ENCODE measurements at regions of chr17 and their contacts with region 1.

Region 1: DNA sequence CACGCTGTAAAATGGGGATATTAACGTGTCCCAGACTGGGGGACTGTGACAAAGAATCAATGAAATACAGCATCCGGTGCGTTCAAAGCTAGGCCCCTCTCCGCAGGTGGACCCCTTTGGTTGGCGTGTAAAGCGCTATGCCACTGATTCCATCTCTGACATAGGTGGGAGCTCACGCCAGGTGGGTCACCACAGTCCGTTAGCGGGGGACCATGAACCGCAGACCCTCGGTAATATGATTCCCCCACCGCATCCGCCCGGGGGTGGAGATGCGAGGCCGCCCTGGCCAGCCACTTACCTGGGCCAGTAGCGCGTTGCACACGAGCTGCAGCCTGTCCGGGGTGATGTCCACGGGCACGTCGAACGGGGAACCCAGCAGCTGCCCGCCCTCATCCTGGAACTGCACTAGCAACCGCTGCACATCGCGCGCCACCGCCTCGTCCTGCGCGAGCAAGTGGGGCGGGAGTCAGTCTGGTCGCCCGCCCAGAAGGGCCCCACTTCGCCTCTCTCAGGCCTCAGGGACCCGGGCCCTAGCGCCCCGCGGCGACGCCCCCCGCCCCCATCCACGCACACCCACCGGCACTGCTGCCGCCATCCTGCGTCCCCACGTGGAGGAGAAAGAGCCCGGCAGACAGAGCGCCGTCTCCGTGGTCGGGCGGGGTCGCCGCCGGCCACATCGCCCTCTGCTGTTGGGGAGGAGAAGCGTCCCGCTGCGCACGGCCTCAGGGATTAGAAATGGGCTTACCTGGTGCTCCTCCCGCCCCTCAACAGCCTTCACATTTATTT is at the start of gene NLE1:
- DNase-seq: peak; percentile 94
- ATAC-seq: peak; percentile 93
- H3K4me3 Mint-ChIP-seq: peak within 1 kb of the TSS; percentile 80
- H3K27ac Mint-ChIP-seq: peak within 1 kb of the TSS; percentile 81
- H3K4me1 Mint-ChIP-seq: peaks cover 14% of the 10 kb centered on the region
- H3K27me3 Mint-ChIP-seq: no peaks in the 10 kb centered on the region
- total RNA-seq, gene NLE1: 38.1 to 40.6 TPM

Region 2: GRCh38 chr17:35006953-35007352 is 134.9 kb before region 1 on chr17:
- CTCF ChIA-PET with region 1: no interaction called
- POLR2A ChIA-PET with region 1: no interaction called
- intact Hi-C with region 1: no loop called
- DNase-seq: no peak
- ATAC-seq: no peak
- H3K4me3 Mint-ChIP-seq: no peak overlapping the region
- H3K27ac Mint-ChIP-seq: peak overlapping the region; percentile 30
- H3K4me1 Mint-ChIP-seq: no peaks in the 10 kb centered on the region
- H3K27me3 Mint-ChIP-seq: no peaks in the 10 kb centered on the region

Region 3: DNA sequence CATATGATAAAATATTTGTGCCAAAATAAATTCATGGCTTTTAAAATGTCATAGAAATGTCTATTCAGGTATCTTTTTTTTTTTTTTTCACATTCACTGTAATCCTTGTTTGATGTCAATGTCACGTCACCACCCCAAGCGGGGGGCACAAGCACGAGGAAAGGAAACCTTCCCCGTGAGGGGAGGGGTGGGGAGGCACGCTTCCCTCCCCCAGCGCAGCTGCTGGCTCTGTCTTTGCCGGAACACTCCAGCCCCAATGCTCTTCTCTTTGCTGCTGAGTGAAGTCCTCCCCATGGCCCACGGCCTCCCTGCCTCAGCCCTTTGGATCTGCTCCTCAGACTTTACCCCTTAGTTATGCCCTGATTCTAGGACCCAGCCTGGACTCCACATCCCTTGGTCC is 50.8 kb after region 1 on chr17:
- CTCF ChIA-PET with region 1: no interaction called
- POLR2A ChIA-PET with region 1: no interaction called
- intact Hi-C with region 1: no loop called
- DNase-seq: no peak
- ATAC-seq: peak; percentile 43
- H3K4me3 Mint-ChIP-seq: peak overlapping the region; percentile 43
- H3K27ac Mint-ChIP-seq: peak overlapping the region; percentile 65
- H3K4me1 Mint-ChIP-seq: peaks cover 46% of the 10 kb centered on the region
- H3K27me3 Mint-ChIP-seq: no peaks in the 10 kb centered on the region

Region 4: GRCh38 chr17:35273684-35274083 is 131.8 kb after region 1 on chr17:
- CTCF ChIA-PET with region 1: no interaction called
- POLR2A ChIA-PET with region 1: no interaction called
- intact Hi-C with region 1: loop called in 1 of 2 experiments (anchors 5 kb)
- DNase-seq: no peak
- ATAC-seq: no peak
- H3K4me3 Mint-ChIP-seq: no peak overlapping the region
- H3K27ac Mint-ChIP-seq: no peak overlapping the region
- H3K4me1 Mint-ChIP-seq: peaks cover 49% of the 10 kb centered on the region
- H3K27me3 Mint-ChIP-seq: no peaks in the 10 kb centered on the region

Region 5: DNA sequence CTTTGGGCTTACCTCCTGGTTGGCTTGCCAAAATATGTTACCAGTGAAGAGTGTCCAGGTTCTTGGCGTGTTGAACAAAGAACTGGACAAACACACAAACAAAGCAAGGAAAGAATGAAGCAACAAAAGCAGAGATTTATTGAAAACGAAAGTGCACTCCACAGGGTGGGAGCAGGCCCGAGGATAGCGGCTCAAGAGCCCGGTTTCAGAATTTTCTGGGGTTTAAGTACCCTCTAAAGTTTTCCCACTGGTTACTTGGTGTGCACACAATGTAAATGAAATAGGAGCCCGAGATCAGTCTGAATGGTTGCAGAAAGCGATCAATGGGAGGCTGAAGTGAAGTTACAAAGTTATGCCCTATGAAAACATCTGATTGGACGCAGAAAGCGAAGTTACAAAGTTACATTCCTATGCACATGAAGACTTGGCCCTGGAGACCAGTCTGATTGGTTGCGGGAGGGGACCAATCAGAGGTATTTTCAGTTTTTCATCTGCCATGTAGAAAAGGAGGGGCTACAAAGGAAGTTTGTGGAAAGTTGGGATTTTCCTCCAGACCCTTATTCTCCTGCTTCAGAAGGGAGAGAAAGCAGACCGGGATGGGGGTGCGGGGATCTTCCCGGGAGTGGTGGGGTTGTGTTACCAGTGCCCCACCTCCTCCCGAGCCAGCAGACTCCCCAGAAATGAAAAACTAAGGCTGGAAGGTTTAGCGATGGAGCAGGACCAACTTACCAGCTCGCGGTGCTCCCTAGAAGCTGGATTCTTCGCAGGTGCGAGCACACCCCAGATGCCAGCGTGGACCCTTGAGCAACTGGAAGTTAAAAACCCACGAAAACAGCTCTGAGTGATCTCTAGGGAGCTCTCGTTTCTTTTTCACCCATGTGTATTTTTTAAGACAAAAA is 290.6 kb after region 1 on chr17 and contains the start of gene SLFN12:
- CTCF ChIA-PET with region 1: no interaction called
- POLR2A ChIA-PET with region 1: interaction called, 3 read pairs
- intact Hi-C with region 1: loop called in 1 of 2 experiments (anchors 2 kb)
- DNase-seq: peak; percentile 63
- ATAC-seq: peak; percentile 83
- H3K4me3 Mint-ChIP-seq: peak within 1 kb of the TSS; percentile 90
- H3K27ac Mint-ChIP-seq: peak within 1 kb of the TSS; percentile 98
- H3K4me1 Mint-ChIP-seq: peaks cover 40% of the 10 kb centered on the region
- H3K27me3 Mint-ChIP-seq: no peaks in the 10 kb centered on the region
- total RNA-seq, gene SLFN12: 5.4 TPM

Region 6: DNA sequence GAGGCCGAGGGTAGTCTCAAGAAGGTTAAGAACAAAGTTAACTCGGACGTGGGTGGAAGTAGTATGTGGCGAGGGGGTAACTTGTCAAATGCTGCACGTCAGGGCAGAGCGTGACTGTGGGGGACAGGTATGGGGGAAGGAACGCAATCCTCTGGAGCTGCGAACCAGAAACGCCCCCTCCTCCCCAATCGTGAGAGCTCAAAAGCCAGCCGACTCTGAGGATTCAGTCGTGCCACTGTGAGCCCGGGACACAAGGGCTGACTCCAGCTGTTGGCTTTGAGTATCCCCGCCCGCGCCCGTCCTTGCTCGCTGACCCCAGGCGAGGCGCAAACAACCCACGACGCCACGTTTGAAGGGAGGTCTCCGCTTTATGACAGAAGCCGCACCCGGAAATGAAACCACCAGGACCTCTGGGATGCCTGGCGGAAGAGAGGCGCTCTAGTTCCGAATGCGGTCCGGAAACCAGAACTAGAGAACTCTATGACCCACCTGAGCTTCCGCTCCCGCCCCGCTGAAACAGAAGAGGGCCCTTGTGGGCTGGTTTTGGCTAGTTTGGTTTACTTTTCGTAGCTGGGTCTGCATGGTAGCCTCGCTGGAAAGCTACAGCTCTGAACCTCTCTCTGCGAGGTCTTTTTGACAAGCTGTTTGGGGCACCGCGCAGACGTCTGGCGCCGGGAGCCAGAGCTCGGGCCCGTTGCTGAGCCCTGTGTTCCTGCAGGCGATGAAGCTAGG is 436.5 kb after region 1 on chr17 and contains the start of gene PEX12:
- CTCF ChIA-PET with region 1: no interaction called
- POLR2A ChIA-PET with region 1: no interaction called
- intact Hi-C with region 1: loop called in 1 of 2 experiments (anchors 2 kb)
- DNase-seq: peak; percentile 92
- ATAC-seq: peak; percentile 93
- H3K4me3 Mint-ChIP-seq: peak within 1 kb of the TSS; percentile 96
- H3K27ac Mint-ChIP-seq: peak within 1 kb of the TSS; percentile 98
- H3K4me1 Mint-ChIP-seq: peaks cover 23% of the 10 kb centered on the region
- H3K27me3 Mint-ChIP-seq: no peaks in the 10 kb centered on the region
- total RNA-seq, gene PEX12: 5.7 to 6.1 TPM

Region 7: GRCh38 chr17:35731239-35731931 is 589.5 kb after region 1 on chr17 and contains the start of gene RASL10B:
- CTCF ChIA-PET with region 1: no interaction called
- POLR2A ChIA-PET with region 1: no interaction called
- intact Hi-C with region 1: loop called in 1 of 2 experiments (anchors 5 kb)
- DNase-seq: peak; percentile 81
- ATAC-seq: peak; percentile 84
- H3K4me3 Mint-ChIP-seq: peak within 1 kb of the TSS; percentile 70
- H3K27ac Mint-ChIP-seq: peak within 1 kb of the TSS; percentile 70
- H3K4me1 Mint-ChIP-seq: peaks cover 16% of the 10 kb centered on the region
- H3K27me3 Mint-ChIP-seq: no peaks in the 10 kb centered on the region
- total RNA-seq, gene RASL10B: 2.7 to 4.0 TPM

Measured in activated CD4-positive, alpha-beta T cell treated with anti-CD3 and anti-CD28 coated beads for 36 hours (primary cell).